CD4-positive, alpha-beta memory T cell (primary cell): ENCODE measurements at regions of chr3 and their contacts with region 1.

Region 1: GRCh38 chr3:68876112-68876713 is 56.1 kb downstream of the TAFA4 start:
- DNase-seq: peak in 4 of 5 donors; percentile 49 to 58 (median 52)
- H3K4me3 ChIP-seq: no peak overlapping the region
- H3K4me3 Mint-ChIP-seq: no peak overlapping the region
- H3K27ac ChIP-seq: no peak overlapping the region
- H3K27ac Mint-ChIP-seq: no peak overlapping the region
- H3K4me1 ChIP-seq: no peaks in the 10 kb centered on the region
- H3K4me1 Mint-ChIP-seq: no peaks in the 10 kb centered on the region
- H3K27me3 ChIP-seq: no peaks in the 10 kb centered on the region
- H3K27me3 Mint-ChIP-seq: peaks cover 9% of the 10 kb centered on the region in 2 donors

Region 2: GRCh38 chr3:66938338-66938963 is 1937.8 kb before region 1 on chr3:
- CTCF ChIA-PET with region 1: interaction called, 42 read pairs
- POLR2A ChIA-PET with region 1: no interaction called
- intact Hi-C with region 1: loop called (anchors 1 kb)
- DNase-seq: peak; percentile 33 to 42 (median 34)
- H3K4me3 ChIP-seq: no peak overlapping the region
- H3K4me3 Mint-ChIP-seq: no peak overlapping the region
- H3K27ac ChIP-seq: no peak overlapping the region
- H3K27ac Mint-ChIP-seq: no peak overlapping the region
- H3K4me1 ChIP-seq: no peaks in the 10 kb centered on the region
- H3K4me1 Mint-ChIP-seq: no peaks in the 10 kb centered on the region
- H3K27me3 ChIP-seq: no peaks in the 10 kb centered on the region
- H3K27me3 Mint-ChIP-seq: peaks cover 6 to 9% of the 10 kb centered on the region in 2 donors

Region 3: DNA sequence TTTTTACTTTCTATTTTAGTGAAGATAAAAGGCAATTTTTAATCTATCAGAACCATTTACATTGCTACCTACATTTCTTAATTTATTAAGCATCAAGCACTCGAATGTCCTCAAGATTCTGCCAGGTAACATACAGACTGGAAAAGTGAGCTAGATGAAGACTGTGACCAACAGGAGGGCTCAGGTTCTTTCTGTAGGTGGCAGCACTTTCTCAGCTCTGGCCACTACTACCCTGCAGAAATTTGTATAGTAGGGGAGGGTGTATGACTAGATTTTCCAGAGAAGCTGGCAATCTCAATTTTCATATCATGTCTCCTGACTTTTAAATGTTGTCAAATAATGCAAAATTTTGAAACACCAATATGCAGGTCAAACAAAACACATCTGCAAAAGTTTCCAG is 1056.8 kb before region 1 on chr3:
- CTCF ChIA-PET with region 1: interaction called, 19 read pairs
- POLR2A ChIA-PET with region 1: no interaction called
- intact Hi-C with region 1: no loop called
- DNase-seq: peak in 4 of 5 donors; percentile 8 to 21 (median 12)
- H3K4me3 ChIP-seq: no peak overlapping the region
- H3K4me3 Mint-ChIP-seq: no peak overlapping the region
- H3K27ac ChIP-seq: no peak overlapping the region
- H3K27ac Mint-ChIP-seq: no peak overlapping the region
- H3K4me1 ChIP-seq: no peaks in the 10 kb centered on the region
- H3K4me1 Mint-ChIP-seq: no peaks in the 10 kb centered on the region
- H3K27me3 ChIP-seq: no peaks in the 10 kb centered on the region
- H3K27me3 Mint-ChIP-seq: no peaks in the 10 kb centered on the region

Region 4: GRCh38 chr3:67901681-67902080 is 974.5 kb before region 1 on chr3:
- CTCF ChIA-PET with region 1: no interaction called
- POLR2A ChIA-PET with region 1: no interaction called
- intact Hi-C with region 1: loop called (anchors 1 kb)
- DNase-seq: peak in 4 of 5 donors; percentile 3 to 14 (median 10)
- H3K4me3 ChIP-seq: no peak overlapping the region
- H3K4me3 Mint-ChIP-seq: no peak overlapping the region
- H3K27ac ChIP-seq: no peak overlapping the region
- H3K27ac Mint-ChIP-seq: no peak overlapping the region
- H3K4me1 ChIP-seq: peaks cover 8% of the 10 kb centered on the region
- H3K4me1 Mint-ChIP-seq: peaks cover 6 to 8% (median 6%) of the 10 kb centered on the region in 4 donors
- H3K27me3 ChIP-seq: no peaks in the 10 kb centered on the region
- H3K27me3 Mint-ChIP-seq: no peaks in the 10 kb centered on the region

Region 5: GRCh38 chr3:68893600-68894239 is 17.5 kb after region 1 on chr3:
- CTCF ChIA-PET with region 1: interaction called, 25 read pairs
- POLR2A ChIA-PET with region 1: no interaction called
- intact Hi-C with region 1: no loop called
- DNase-seq: peak in 4 of 5 donors; percentile 29 to 36 (median 32)
- H3K4me3 ChIP-seq: no peak overlapping the region
- H3K4me3 Mint-ChIP-seq: no peak overlapping the region
- H3K27ac ChIP-seq: no peak overlapping the region
- H3K27ac Mint-ChIP-seq: no peak overlapping the region
- H3K4me1 ChIP-seq: no peaks in the 10 kb centered on the region
- H3K4me1 Mint-ChIP-seq: no peaks in the 10 kb centered on the region
- H3K27me3 ChIP-seq: no peaks in the 10 kb centered on the region
- H3K27me3 Mint-ChIP-seq: peaks cover 7 to 14% of the 10 kb centered on the region in 2 donors

Region 6: GRCh38 chr3:68943753-68944500 is 67.7 kb after region 1 on chr3:
- CTCF ChIA-PET with region 1: no interaction called
- POLR2A ChIA-PET with region 1: no interaction called
- intact Hi-C with region 1: no loop called
- DNase-seq: no peak
- H3K4me3 ChIP-seq: no peak overlapping the region
- H3K4me3 Mint-ChIP-seq: no peak overlapping the region
- H3K27ac ChIP-seq: no peak overlapping the region
- H3K27ac Mint-ChIP-seq: no peak overlapping the region
- H3K4me1 ChIP-seq: no peaks in the 10 kb centered on the region
- H3K4me1 Mint-ChIP-seq: no peaks in the 10 kb centered on the region
- H3K27me3 ChIP-seq: no peaks in the 10 kb centered on the region
- H3K27me3 Mint-ChIP-seq: peaks cover 16% of the 10 kb centered on the region in 2 donors